Dendritic cell treated with granulocyte-macrophage colony-stimulating factor and Interleukin-4, amounts not matched to agents 40 ng/mL and 50 ng/mL, for 4 days (primary cell): ENCODE measurements at regions of chr14 and their contacts with region 1.

Region 1: GRCh38 chr14:74712499-74713394 is at the starts of genes AREL1 and FCF1:
- H3K4me3 Mint-ChIP-seq: peak within 1 kb of the TSS; percentile 94
- H3K27ac Mint-ChIP-seq: peak within 1 kb of the TSS; percentile 98
- H3K4me1 Mint-ChIP-seq: peaks cover 18% of the 10 kb centered on the region
- H3K27me3 Mint-ChIP-seq: no peaks in the 10 kb centered on the region

Region 2: DNA sequence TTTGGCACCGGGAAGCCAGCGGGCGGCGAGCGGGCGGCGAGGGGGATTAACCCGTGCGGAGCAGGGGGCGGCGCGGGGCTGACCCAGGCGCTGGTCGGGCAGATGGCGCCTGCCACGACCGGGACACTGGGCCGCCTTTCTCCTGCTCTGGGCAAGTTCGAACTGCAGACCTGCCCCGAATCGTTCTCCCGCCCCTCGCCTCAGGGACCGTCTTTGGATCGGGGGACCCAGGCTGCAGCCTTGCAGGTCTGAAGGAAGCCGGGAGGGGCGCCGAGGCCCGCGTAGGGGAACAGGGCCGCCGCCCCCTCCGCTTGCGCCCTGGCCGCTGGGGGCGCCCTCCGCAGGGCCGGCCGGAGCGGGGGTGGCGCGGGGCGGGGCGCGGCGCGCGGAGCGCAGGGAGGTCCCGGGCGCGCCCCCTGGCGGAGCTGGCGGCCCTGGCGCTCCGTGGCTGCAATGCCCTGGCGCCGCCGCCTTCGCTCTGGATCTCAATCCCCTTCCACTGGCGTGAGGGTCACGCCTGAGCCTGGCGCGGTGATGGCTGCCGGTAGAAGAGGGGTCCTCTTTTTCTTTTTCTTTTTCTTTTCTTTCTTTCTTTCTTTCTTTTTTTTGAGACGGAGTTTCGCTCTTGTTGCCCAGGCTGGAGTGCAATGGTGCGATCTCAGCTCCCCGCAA is 100.3 kb before region 1 on chr14:
- intact Hi-C with region 1: loop called (anchors 5 kb)
- H3K4me3 Mint-ChIP-seq: peak overlapping the region; percentile 78
- H3K27ac Mint-ChIP-seq: peak overlapping the region; percentile 76
- H3K4me1 Mint-ChIP-seq: peaks cover 66% of the 10 kb centered on the region
- H3K27me3 Mint-ChIP-seq: peaks cover 46% of the 10 kb centered on the region

Region 3: GRCh38 chr14:74762917-74763802 is 50.4 kb after region 1 on chr14 and contains the start of gene YLPM1:
- intact Hi-C with region 1: loop called (anchors 2 kb)
- H3K4me3 Mint-ChIP-seq: peak within 1 kb of the TSS; percentile 99
- H3K27ac Mint-ChIP-seq: peak within 1 kb of the TSS; percentile 90
- H3K4me1 Mint-ChIP-seq: peaks cover 40% of the 10 kb centered on the region
- H3K27me3 Mint-ChIP-seq: peaks cover 3% of the 10 kb centered on the region

Region 4: GRCh38 chr14:75452900-75453747 is 740.4 kb after region 1 on chr14:
- intact Hi-C with region 1: no loop called
- H3K4me3 Mint-ChIP-seq: no peak overlapping the region
- H3K27ac Mint-ChIP-seq: no peak overlapping the region
- H3K4me1 Mint-ChIP-seq: peaks cover 56% of the 10 kb centered on the region
- H3K27me3 Mint-ChIP-seq: no peaks in the 10 kb centered on the region